Right ventricle myocardium superior (tissue), 1 donor: ENCODE measurements at regions of chr1 and their contacts with region 1.

Region 1: DNA sequence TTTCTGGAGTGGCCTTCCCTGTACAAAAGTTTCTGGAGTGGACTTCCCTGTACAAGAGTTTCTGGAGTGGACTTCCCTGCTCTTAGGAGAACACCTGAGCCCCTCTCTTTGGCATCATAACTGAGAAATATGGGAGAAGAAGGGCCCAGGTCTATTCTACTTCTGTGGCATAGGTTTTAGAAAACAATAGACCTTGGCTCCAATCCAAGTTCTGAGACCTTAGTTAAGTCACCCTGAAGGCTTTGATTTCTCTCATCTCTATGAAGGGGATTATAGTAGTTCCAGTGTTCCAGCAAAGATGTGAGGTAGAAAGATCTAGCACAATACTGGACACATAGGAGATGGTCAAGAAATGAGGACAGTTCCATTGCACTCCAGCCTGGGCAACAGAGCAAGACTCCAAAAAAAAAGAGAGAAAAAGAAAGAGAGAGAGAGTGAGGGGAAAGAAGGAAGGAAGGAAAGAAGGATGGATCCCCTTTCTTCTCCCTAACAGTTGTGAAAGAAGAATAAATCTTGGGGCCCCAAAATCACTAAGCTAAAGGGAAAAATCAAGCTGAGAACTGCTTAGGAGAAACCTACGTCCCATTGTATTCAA is 13.3 kb upstream of the EIF4G3 start:
- DNase-seq: no peak
- ATAC-seq: no peak

Region 2: DNA sequence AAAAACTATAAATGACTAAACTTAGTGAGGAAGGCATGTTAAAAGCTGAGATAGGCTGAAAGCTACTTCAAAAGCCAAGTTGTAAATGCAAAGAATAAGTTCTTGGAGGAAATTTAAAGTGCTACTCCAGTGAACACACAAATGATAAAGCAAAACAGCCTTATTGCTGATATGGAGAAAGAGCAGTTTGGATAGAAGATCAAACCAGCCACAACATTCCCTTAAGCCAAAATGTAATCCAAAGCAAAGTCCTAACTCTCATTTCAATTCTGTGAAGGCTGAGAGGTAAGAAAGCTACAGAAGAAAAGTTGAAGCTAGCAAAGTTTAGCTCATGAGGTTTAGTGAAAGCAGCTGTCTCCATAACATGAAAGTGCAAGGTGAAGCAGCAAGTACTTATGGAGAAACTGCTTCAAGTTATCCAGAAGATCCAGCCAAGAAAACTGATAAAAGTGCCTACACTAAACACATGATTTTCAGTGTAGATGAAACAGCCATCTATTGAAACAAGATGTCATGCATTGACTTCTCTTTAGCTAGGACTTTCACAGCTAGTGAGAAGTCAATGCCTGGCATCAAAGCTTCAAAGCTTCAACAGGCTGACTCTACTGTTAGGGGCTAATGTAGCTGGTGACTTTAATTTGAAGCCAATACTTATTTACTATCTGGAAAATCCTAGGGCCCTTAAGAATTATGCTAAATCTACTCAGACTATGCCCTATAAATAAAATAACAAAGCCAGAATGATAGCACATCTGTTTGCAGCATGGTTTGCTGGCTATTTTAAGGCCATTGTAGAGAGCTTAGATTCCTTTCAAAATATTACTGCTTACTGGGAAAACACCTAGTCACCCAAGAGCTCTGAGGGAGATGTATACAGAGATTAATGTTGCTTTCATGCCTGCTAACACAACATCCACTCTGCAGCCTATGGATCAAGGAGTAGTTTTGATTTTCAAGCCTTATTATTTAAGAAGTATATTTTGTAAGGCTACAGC is 201.9 kb before region 1 on chr1:
- intact Hi-C with region 1: loop called (anchors 5 kb)
- DNase-seq: no peak
- ATAC-seq: no peak